MCF 10A (cell line): ENCODE measurements at regions of chr3 and their contacts with region 1.

Region 1: DNA sequence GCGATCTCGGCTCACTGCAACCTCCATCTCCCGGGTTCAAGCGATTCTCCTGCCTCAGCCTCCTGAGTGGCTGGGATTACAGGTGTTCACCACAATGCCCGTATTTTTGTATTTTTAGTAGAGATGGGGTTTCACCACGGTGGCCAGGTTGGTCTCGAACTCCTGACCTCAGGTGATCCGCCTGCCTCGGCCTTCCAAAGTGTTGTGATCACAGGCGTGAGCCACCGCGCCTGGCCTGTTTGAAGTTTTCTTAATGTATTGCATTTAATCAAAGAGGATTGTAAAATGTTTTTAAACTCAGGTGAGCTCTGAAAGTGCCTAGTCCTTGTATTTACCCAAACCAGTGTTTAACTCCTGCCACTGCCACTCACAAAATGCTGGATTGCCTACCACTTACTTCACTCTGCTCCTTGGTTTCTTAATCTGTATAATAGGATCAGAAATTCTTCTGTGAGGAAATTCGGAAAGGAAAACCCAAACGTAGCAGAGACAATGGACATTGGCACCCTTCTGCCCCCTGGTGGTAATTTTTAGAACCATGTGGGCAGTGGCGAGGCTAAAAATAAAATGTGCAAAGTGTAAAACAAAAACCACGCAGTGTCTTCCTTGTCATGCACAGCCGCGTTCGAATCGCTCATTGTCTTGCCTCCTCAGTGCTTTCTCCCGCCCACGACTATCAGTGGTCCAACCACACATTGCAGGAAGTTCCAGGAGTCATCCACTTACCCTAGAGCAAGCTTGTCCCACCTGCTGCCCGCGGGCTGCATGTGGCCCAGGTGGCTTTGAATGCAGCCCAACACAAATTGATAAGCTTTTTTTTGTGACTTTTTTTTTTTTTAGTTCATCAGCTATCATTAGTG is 27.3 kb downstream of the CEP19 start:
- DNase-seq: peak; percentile 74
- H3K4me3 Mint-ChIP-seq: no peak overlapping the region
- H3K27ac Mint-ChIP-seq: no peak overlapping the region
- H3K4me1 Mint-ChIP-seq: peaks cover 15% of the 10 kb centered on the region
- H3K27me3 Mint-ChIP-seq: no peaks in the 10 kb centered on the region
- CTCF ChIP-seq: peak; percentile 71

Region 2: GRCh38 chr3:196251918-196252317 is 432.9 kb before region 1 on chr3:
- CTCF ChIA-PET with region 1: interaction called, 4 read pairs
- POLR2A ChIA-PET with region 1: no interaction called
- intact Hi-C with region 1: loop called (anchors 10 kb)
- DNase-seq: no peak
- H3K4me3 Mint-ChIP-seq: no peak overlapping the region
- H3K27ac Mint-ChIP-seq: no peak overlapping the region
- H3K4me1 Mint-ChIP-seq: no peaks in the 10 kb centered on the region
- H3K27me3 Mint-ChIP-seq: no peaks in the 10 kb centered on the region
- CTCF ChIP-seq: no peak

Region 3: DNA sequence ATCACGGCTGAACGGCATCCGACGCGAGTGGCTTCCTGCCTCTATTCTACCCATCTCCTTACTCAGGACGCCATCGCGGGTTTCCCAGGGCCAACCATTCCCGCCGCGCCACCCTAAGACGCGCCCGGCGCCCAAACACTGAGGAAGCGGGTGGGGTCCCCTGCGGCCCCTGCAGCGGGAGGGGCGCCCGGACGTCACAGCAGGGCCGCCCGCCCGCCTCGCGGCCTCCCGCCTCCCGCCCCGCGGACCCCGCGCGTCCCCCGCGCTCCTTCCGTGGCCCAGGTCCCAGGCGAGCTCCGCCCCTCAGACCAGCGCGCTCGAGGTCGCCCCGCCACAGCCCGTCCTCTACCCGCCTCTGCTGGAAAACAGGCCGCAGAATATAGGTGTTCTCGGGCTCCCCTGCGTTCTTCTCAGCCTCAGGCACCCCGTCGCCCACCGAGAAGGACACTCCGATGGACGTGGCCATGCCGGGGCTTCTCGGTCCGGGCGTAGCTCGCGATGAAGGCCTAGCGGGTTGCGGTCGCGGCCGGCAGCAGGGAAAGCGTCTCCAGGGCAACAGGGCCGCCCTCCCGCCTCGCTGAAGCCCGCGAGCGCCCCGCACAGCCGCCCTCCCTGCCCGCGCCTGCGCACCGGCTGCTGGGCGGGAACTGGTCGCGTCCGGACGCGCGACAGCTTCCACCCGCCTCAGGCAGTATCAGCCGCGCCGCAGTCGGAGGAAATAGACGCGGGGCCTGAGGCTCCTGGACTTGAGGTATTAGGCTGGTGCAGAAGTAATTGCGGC is 366.9 kb before region 1 on chr3 and contains the start of gene DYNLT2B:
- CTCF ChIA-PET with region 1: no interaction called
- POLR2A ChIA-PET with region 1: no interaction called
- intact Hi-C with region 1: no loop called
- DNase-seq: peak; percentile 87
- H3K4me3 Mint-ChIP-seq: peak within 1 kb of the TSS; percentile 94
- H3K27ac Mint-ChIP-seq: peak within 1 kb of the TSS; percentile 95
- H3K4me1 Mint-ChIP-seq: no peaks in the 10 kb centered on the region
- H3K27me3 Mint-ChIP-seq: no peaks in the 10 kb centered on the region
- CTCF ChIP-seq: no peak
- total RNA-seq, gene DYNLT2B: 22.3 and 23.5 TPM in 2 replicates

Region 4: GRCh38 chr3:196537319-196537984 is 147.3 kb before region 1 on chr3:
- CTCF ChIA-PET with region 1: interaction called, 6 read pairs
- POLR2A ChIA-PET with region 1: interaction called, 3 read pairs
- intact Hi-C with region 1: loop called (anchors 10 kb)
- DNase-seq: peak; percentile 45
- H3K4me3 Mint-ChIP-seq: no peak overlapping the region
- H3K27ac Mint-ChIP-seq: peak overlapping the region; percentile 14
- H3K4me1 Mint-ChIP-seq: peaks cover 13% of the 10 kb centered on the region
- H3K27me3 Mint-ChIP-seq: no peaks in the 10 kb centered on the region
- CTCF ChIP-seq: peak; percentile 73

Region 5: GRCh38 chr3:196596355-196596754 is 88.4 kb before region 1 on chr3:
- CTCF ChIA-PET with region 1: no interaction called
- POLR2A ChIA-PET with region 1: no interaction called
- intact Hi-C with region 1: no loop called
- DNase-seq: peak; percentile 6
- H3K4me3 Mint-ChIP-seq: no peak overlapping the region
- H3K27ac Mint-ChIP-seq: no peak overlapping the region
- H3K4me1 Mint-ChIP-seq: no peaks in the 10 kb centered on the region
- H3K27me3 Mint-ChIP-seq: no peaks in the 10 kb centered on the region
- CTCF ChIP-seq: no peak

Region 6: GRCh38 chr3:196609343-196609775 is 75.4 kb before region 1 on chr3:
- CTCF ChIA-PET with region 1: interaction called, 149 read pairs
- POLR2A ChIA-PET with region 1: interaction called, 6 read pairs
- intact Hi-C with region 1: loop called (anchors 1 kb)
- DNase-seq: peak; percentile 89
- H3K4me3 Mint-ChIP-seq: no peak overlapping the region
- H3K27ac Mint-ChIP-seq: no peak overlapping the region
- H3K4me1 Mint-ChIP-seq: peaks cover 9% of the 10 kb centered on the region
- H3K27me3 Mint-ChIP-seq: no peaks in the 10 kb centered on the region
- CTCF ChIP-seq: peak; percentile 93

Region 7: DNA sequence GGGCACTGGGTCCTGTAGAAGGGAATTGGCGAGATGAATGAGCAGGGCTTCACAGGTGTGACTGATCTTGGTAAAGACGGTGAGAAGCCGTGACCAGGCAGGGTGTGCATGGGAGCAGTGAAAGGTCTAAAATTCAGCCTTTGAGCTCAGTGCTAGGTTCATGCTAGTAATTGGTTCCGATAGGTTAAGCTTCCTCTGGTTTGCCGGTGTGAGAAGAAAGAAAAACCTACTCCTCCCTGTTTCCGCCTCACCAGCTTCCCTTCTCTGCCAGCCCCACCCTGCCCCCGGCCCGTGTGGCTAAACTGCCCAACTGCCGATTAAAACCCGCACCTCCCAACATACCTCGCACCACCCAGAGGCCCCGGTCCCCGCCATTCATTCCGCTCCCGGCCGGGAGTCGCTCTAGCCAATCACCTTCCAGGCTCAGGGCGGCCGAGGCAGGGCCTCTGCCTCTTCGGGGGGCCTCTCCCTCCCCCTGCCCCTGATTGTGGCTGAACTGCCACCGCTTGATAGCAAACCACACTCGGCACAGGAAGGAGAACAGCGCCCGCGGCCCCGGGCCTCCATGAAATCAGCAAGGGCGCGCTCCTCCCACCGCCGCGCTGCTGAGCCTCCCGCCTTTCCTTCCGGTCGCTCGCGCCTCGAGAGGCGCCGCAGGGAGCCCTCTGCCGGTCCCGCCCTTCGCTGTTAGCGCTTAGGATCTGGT is 52.6 kb before region 1 on chr3:
- CTCF ChIA-PET with region 1: interaction called, 8 read pairs
- POLR2A ChIA-PET with region 1: interaction called, 3 read pairs
- intact Hi-C with region 1: loop called (anchors 1 kb)
- DNase-seq: peak; percentile 78
- H3K4me3 Mint-ChIP-seq: peak overlapping the region; percentile 94
- H3K27ac Mint-ChIP-seq: peak overlapping the region; percentile 93
- H3K4me1 Mint-ChIP-seq: peaks cover 8% of the 10 kb centered on the region
- H3K27me3 Mint-ChIP-seq: no peaks in the 10 kb centered on the region
- CTCF ChIP-seq: peak; percentile 23

Region 8: GRCh38 chr3:196711838-196712513 is 27.2 kb after region 1 on chr3 and contains the starts of genes CEP19 and PIGX:
- CTCF ChIA-PET with region 1: interaction called, 10 read pairs
- POLR2A ChIA-PET with region 1: no interaction called
- intact Hi-C with region 1: no loop called
- DNase-seq: peak; percentile 79
- H3K4me3 Mint-ChIP-seq: peak within 1 kb of the TSS; percentile 93
- H3K27ac Mint-ChIP-seq: peak within 1 kb of the TSS; percentile 91
- H3K4me1 Mint-ChIP-seq: peaks cover 5% of the 10 kb centered on the region
- H3K27me3 Mint-ChIP-seq: no peaks in the 10 kb centered on the region
- CTCF ChIP-seq: no peak
- total RNA-seq, gene CEP19: 1.8 and 3.2 TPM in 2 replicates
- total RNA-seq, gene PIGX: 20.8 and 23.2 TPM in 2 replicates